WTC11 (cell line): ENCODE measurements at regions of chr1 and their contacts with region 1.

Region 1: DNA sequence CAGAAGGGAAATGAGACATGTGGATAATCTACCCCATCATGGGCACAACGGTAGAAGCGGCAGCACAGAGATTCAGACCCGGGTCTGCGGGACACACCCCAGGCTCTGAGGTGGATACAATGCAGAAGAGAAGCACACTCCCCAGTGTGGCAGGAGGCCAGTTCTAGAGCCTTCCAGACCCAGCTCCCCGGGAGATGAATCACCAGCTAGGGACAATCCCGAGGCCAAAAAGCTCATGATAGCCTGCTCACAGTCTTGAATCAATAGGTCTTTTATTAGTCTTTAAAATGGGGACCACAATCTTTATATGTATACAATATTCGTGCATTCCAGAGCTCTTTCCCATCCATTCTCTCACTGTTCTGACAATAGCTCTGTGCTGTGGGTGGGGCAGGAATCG is 57.3 kb upstream of the DIRAS3 start:
- DNase-seq: no peak
- ATAC-seq: peak; percentile 57
- H3K4me3 Mint-ChIP-seq: no peak overlapping the region
- H3K27ac Mint-ChIP-seq: no peak overlapping the region
- H3K4me1 Mint-ChIP-seq: peaks cover 15% of the 10 kb centered on the region
- H3K27me3 Mint-ChIP-seq: no peaks in the 10 kb centered on the region
- CTCF ChIP-seq: no peak

Region 2: GRCh38 chr1:67958472-67958871 is 149.3 kb before region 1 on chr1:
- CTCF ChIA-PET with region 1: no interaction called
- POLR2A ChIA-PET with region 1: no interaction called
- DNase-seq: no peak
- ATAC-seq: no peak
- H3K4me3 Mint-ChIP-seq: no peak overlapping the region
- H3K27ac Mint-ChIP-seq: no peak overlapping the region
- H3K4me1 Mint-ChIP-seq: no peaks in the 10 kb centered on the region
- H3K27me3 Mint-ChIP-seq: no peaks in the 10 kb centered on the region; the same call in 1 of the 2 replicates
- CTCF ChIP-seq: no peak

Region 3: GRCh38 chr1:68057564-68057963 is 50.2 kb before region 1 on chr1:
- CTCF ChIA-PET with region 1: interaction called, 11 read pairs
- POLR2A ChIA-PET with region 1: no interaction called
- DNase-seq: peak; percentile 40
- ATAC-seq: peak; percentile 99
- H3K4me3 Mint-ChIP-seq: no peak overlapping the region
- H3K27ac Mint-ChIP-seq: no peak overlapping the region
- H3K4me1 Mint-ChIP-seq: peaks cover 9% of the 10 kb centered on the region
- H3K27me3 Mint-ChIP-seq: peaks cover under 1% of the 10 kb centered on the region; the same call in 1 of the 2 replicates
- CTCF ChIP-seq: no peak

Region 4: DNA sequence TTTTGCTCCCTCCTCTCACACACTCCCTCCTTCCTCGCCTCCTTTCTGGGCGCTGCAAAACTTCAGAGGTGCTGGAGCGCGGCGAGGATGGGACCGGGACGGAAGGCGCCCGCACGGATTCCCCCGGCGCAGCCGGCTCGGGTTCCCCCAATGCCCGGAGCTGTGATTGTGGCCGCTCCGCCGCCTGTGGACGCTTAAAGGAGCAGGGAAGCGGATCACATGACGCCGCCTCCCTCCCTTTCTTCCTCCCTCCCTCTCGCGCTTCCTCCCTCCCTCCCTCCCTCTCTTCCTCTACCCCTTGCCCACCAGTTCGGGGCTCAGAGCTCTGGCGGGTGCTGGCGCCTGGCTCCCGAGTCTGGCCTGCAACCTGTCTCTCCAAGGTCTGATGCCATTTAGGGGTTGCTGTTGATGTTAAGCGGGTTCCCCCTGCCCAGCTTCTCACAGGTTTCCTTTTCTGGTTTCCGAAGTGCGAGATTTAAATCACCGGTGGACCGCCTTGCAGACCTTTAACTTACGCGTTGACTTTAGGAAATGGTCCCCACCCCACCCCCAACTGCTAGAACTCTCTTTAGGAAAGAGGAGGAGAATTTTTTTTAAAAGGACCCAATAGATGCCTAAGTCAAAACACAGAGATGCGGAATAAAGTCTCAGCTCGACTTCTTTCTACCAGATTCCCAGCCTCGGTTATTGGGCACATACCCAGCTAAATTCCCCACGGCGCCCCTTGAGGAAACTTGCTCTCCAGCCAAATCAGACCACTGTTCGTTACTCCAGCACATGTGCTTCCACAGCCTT is 124.8 kb after region 1 on chr1 and contains the start of gene WLS:
- CTCF ChIA-PET with region 1: no interaction called
- POLR2A ChIA-PET with region 1: no interaction called
- DNase-seq: peak; percentile 79
- ATAC-seq: peak; percentile 76
- H3K4me3 Mint-ChIP-seq: peak within 1 kb of the TSS; percentile 82
- H3K27ac Mint-ChIP-seq: no peak within 1 kb of the TSS
- H3K4me1 Mint-ChIP-seq: peaks cover 29% of the 10 kb centered on the region
- H3K27me3 Mint-ChIP-seq: peaks cover 98% of the 10 kb centered on the region
- CTCF ChIP-seq: no peak
- total RNA-seq, gene WLS: 4.5 to 5.7 TPM (median 5.3 TPM) in 3 replicates